ENCODE measurements at regions of chr4 and their contacts with region 1.

Region 1: GRCh38 chr4:101191302-101192098 is 155.8 kb downstream of the PPP3CA start:
- DNase-seq: peak; percentile 72
- H3K4me3 ChIP-seq: peak overlapping the region; percentile 26
- H3K27ac ChIP-seq: peak overlapping the region; percentile 79
- H3K4me1 ChIP-seq: peaks cover 23% of the 10 kb centered on the region
- H3K27me3 ChIP-seq: no peaks in the 10 kb centered on the region
- CTCF ChIP-seq: peak; percentile 19

Region 2: GRCh38 chr4:101244349-101244748 is 52.8 kb after region 1 on chr4:
- intact Hi-C with region 1: no loop called
- DNase-seq: no peak
- H3K4me3 ChIP-seq: no peak overlapping the region
- H3K27ac ChIP-seq: no peak overlapping the region
- H3K4me1 ChIP-seq: peaks cover 3% of the 10 kb centered on the region
- H3K27me3 ChIP-seq: no peaks in the 10 kb centered on the region
- CTCF ChIP-seq: no peak

Region 3: DNA sequence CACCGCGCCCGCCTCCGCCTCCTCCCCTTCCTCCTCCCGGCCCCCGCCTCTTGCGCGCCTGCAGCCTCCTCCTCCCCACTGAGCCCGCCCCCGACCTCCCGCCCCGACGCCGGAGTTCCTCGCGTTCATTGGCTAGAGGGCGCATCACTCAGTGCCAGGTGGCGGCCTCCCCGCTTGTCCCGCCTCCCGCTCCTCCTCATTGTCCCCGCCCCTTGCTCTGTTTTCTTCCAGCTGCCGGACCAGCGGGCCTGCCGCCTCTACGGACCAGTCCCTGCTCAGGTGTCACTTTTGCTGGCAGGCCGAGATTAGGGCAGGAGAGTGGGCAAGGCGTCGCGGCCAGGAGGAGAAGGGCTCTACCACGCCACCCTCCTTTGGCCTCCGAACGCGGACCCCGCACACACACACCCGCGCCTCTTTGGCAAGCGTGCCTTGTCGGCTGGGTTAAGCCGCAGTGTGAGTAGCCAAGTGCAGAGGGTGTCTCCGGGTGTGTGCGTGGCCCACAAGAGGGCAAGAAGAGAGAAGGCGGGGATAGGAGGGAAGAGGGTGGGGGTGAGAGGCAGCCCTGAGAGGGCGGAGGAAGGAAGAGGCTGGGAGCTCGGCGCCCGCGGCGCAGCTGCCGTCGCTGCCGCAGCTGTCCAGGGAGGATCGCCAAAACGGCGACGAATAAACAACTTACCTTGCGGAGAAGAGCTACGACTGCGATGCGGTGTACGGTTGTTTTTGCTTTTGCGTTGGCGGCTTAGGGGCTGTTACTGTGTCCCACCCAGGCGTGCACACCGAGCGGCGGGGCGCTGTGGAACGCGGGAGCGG is 156.3 kb after region 1 on chr4:
- intact Hi-C with region 1: loop called (anchors 10 kb)
- DNase-seq: peak; percentile 99
- H3K4me3 ChIP-seq: peak overlapping the region; percentile 93
- H3K27ac ChIP-seq: peak overlapping the region; percentile 98
- H3K4me1 ChIP-seq: peaks cover 49% of the 10 kb centered on the region
- H3K27me3 ChIP-seq: no peaks in the 10 kb centered on the region
- CTCF ChIP-seq: peak; percentile 14

Measured in left ventricle myocardium inferior (tissue), 1 donor.